ENCODE measurements at regions of chr2 and their contacts with region 1.

Region 1: DNA sequence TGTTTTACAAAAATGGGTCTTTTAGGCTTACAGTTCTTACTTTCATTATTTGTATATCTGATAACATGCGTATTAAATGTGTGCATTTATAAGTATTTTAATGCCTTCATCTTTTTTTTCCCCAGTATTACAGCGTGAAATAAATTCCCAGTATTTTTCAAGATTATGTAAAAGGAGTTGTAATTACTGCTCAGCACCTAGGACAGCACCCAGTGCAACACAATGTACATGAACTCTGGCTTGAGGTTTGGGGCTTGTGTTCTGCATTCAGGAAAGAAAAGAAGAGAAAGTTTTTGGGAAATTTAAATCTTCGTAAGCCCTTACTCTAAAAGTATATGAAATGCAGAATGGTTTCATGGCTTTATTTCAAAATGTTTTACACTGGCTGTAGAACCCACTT is 16.7 kb downstream of the ZNF638 start:
- DNase-seq: no peak
- ATAC-seq: no peak
- H3K4me3 ChIP-seq: no peak overlapping the region
- H3K27ac ChIP-seq: no peak overlapping the region
- H3K4me1 ChIP-seq: no peaks in the 10 kb centered on the region
- H3K27me3 ChIP-seq: no peaks in the 10 kb centered on the region
- CTCF ChIP-seq: no peak
- EP300 ChIP-seq: no peak
- POLR2A ChIP-seq: no peak
- RAD21 ChIP-seq: no peak

Region 2: GRCh38 chr2:71361631-71362030 is 13.3 kb after region 1 on chr2:
- CTCF ChIA-PET with region 1: interaction called, 4 read pairs
- POLR2A ChIA-PET with region 1: no interaction called
- RAD21 ChIA-PET with region 1: interaction called, 5 read pairs
- SMC1A ChIA-PET with region 1: interaction called, 13 read pairs
- in situ Hi-C with region 1: no loop called
- intact Hi-C with region 1: no loop called
- DNase-seq: peak; percentile 41
- ATAC-seq: peak; percentile 93
- H3K4me3 ChIP-seq: no peak overlapping the region
- H3K27ac ChIP-seq: no peak overlapping the region
- H3K4me1 ChIP-seq: no peaks in the 10 kb centered on the region
- H3K27me3 ChIP-seq: no peaks in the 10 kb centered on the region
- CTCF ChIP-seq: no peak
- EP300 ChIP-seq: peak; percentile 56 to 88; a peak in 3 of 4 replicates
- POLR2A ChIP-seq: no peak
- RAD21 ChIP-seq: no peak

Measured in GM12878 (cell line).